Heart left ventricle (tissue), 16 donors: ENCODE measurements at regions of chr5 and their contacts with region 1.

Region 1: GRCh38 chr5:66987949-66988838 is 208.4 kb downstream of the CD180 start:
- DNase-seq: no peak
- ATAC-seq: peak in 2 of 4 donors; percentile 34 to 50
- H3K4me3 ChIP-seq: no peak overlapping the region
- H3K27ac ChIP-seq: no peak overlapping the region
- H3K4me1 ChIP-seq: peaks cover 0 to 45% (median 17%) of the 10 kb centered on the region in 12 donors
- H3K27me3 ChIP-seq: no peaks in the 10 kb centered on the region
- CTCF ChIP-seq: peak; percentile 74 to 88 (median 82)
- POLR2A ChIP-seq: no peak

Region 2: DNA sequence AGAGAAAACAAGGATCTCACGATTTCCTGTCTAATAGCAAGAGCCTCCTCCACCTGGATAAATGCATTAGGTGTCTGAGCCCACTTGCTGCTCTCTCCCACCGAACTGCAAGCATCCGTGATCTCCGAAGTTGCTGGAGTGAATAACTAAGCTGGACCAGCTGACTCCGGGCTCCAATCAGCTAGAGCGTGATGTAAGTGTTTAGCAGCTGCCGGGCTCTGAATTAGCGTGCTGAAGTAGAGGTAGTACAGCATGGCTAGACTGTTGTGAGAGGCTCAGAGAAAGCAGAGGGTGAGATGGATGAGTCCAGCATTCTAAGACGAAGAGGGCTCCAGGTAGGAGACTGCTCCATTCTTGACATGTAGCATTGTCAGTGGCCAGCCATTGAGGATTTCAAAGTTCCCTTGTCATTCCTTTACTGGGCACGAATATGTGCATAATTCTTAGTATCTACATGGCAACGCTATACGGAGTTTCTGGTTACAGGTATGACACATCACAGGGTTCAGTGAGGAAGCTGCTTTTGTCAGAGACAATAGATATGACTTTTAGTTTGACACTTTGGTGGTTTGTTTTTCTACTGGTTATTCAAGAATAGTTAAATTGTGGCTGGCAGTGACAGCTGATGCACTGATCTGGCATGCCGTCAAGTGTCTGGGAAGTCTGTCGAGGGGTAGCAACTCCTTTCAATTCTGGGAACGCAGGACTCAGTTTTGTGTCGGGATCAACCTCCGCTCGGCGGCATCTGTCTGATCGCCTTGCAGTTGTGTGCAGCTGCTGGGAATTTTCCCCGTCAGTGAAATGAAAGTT is 159.4 kb before region 1 on chr5:
- intact Hi-C with region 1: loop called in 1 of 10 experiments (anchors 10 kb)
- DNase-seq: peak; percentile 71 to 85 (median 76)
- ATAC-seq: peak; percentile 89 to 95 (median 94)
- H3K4me3 ChIP-seq: peak overlapping the region; percentile 22 to 64 (median 50)
- H3K27ac ChIP-seq: peak overlapping the region; percentile 26 to 83 (median 72)
- H3K4me1 ChIP-seq: peaks cover 0 to 37% (median 13%) of the 10 kb centered on the region in 12 donors
- H3K27me3 ChIP-seq: no peaks in the 10 kb centered on the region
- CTCF ChIP-seq: no peak
- POLR2A ChIP-seq: peak in 1 of 2 donors; percentile 51

Region 3: GRCh38 chr5:67133776-67134175 is 145.6 kb after region 1 on chr5:
- intact Hi-C with region 1: loop called in 1 of 10 experiments (anchors 10 kb)
- DNase-seq: no peak
- ATAC-seq: no peak
- H3K4me3 ChIP-seq: no peak overlapping the region
- H3K27ac ChIP-seq: no peak overlapping the region
- H3K4me1 ChIP-seq: no peaks in the 10 kb centered on the region
- H3K27me3 ChIP-seq: no peaks in the 10 kb centered on the region
- CTCF ChIP-seq: no peak
- POLR2A ChIP-seq: no peak

Region 4: DNA sequence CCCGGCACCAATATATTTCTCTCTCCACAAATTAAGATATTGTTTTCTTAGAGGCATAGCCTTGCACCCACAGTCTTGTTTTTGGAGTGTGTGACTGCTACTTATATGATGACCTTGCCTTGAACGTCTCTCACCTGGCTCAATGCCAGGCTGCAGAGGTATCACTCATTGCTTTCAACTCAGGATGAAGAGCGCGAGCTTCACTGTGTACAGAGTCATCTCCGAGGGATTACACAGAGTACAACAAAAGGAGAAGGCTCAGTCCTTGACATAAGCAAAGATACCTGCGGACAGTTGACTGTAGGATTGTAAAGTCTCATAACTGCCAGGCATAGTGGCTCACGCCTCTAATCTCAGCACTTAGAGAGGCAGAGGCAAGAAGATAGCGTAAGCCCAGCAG is 154.6 kb after region 1 on chr5:
- intact Hi-C with region 1: loop called in 5 of 10 experiments (anchors 5 to 10 kb)
- DNase-seq: peak in 1 of 5 donors; percentile 38
- ATAC-seq: peak; percentile 30 to 53 (median 36)
- H3K4me3 ChIP-seq: no peak overlapping the region
- H3K27ac ChIP-seq: no peak overlapping the region
- H3K4me1 ChIP-seq: no peaks in the 10 kb centered on the region
- H3K27me3 ChIP-seq: no peaks in the 10 kb centered on the region
- CTCF ChIP-seq: no peak
- POLR2A ChIP-seq: no peak

Region 5: GRCh38 chr5:67149951-67150523 is 161.8 kb after region 1 on chr5:
- intact Hi-C with region 1: loop called in 5 of 10 experiments (anchors 5 to 10 kb)
- DNase-seq: no peak
- ATAC-seq: no peak
- H3K4me3 ChIP-seq: peak overlapping the region in 5 of 12 donors; percentile 15 to 45 (median 29)
- H3K27ac ChIP-seq: peak overlapping the region in 2 of 12 donors; percentile 21 to 28
- H3K4me1 ChIP-seq: peaks cover 0 to 17% (median 6%) of the 10 kb centered on the region in 12 donors
- H3K27me3 ChIP-seq: no peaks in the 10 kb centered on the region
- CTCF ChIP-seq: peak in 11 of 12 donors; percentile 15 to 66 (median 46)
- POLR2A ChIP-seq: no peak

Region 6: GRCh38 chr5:67215583-67216471 is 227.6 kb after region 1 on chr5:
- intact Hi-C with region 1: loop called in 1 of 10 experiments (anchors 10 kb)
- DNase-seq: peak; percentile 81 to 94 (median 88)
- ATAC-seq: peak; percentile 81 to 95 (median 92)
- H3K4me3 ChIP-seq: peak overlapping the region in 9 of 12 donors; percentile 3 to 36 (median 32)
- H3K27ac ChIP-seq: peak overlapping the region in 11 of 12 donors; percentile 11 to 86 (median 61)
- H3K4me1 ChIP-seq: peaks cover 6 to 26% (median 19%) of the 10 kb centered on the region in 12 donors
- H3K27me3 ChIP-seq: no peaks in the 10 kb centered on the region
- CTCF ChIP-seq: no peak
- POLR2A ChIP-seq: no peak

Region 7: DNA sequence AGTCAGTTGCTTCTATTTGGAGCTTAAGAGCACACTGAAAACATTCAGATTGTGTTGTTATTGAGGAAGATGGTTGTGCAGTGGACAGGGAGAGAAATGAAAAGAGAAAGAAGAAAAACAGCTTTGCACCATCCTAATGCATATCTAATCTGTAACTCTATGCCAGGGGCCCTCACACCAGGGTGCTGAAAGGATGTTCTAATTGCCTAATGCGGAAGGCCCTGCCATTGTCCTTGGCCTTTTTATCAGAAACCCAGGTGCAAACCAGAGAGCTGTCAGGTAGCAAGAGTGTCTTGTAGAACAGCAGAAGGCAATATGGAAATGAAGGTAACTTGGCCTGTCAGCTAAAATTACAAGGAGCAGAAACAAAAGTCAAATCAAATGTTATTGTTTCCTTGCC is 842.9 kb after region 1 on chr5:
- intact Hi-C with region 1: no loop called
- DNase-seq: no peak
- ATAC-seq: no peak
- H3K4me3 ChIP-seq: no peak overlapping the region
- H3K27ac ChIP-seq: no peak overlapping the region
- H3K4me1 ChIP-seq: peaks cover 0 to 6% (median 0%) of the 10 kb centered on the region in 12 donors
- H3K27me3 ChIP-seq: no peaks in the 10 kb centered on the region
- CTCF ChIP-seq: no peak
- POLR2A ChIP-seq: no peak